Activated CD8-positive, alpha-beta T cell treated with anti-CD3 and anti-CD28 coated beads, Interleukin-2, amount 10 ng/mL, durations not matched to agents 7 days and 5 days (primary cell): ENCODE measurements at regions of chr1 and their contacts with region 1.

Region 1: DNA sequence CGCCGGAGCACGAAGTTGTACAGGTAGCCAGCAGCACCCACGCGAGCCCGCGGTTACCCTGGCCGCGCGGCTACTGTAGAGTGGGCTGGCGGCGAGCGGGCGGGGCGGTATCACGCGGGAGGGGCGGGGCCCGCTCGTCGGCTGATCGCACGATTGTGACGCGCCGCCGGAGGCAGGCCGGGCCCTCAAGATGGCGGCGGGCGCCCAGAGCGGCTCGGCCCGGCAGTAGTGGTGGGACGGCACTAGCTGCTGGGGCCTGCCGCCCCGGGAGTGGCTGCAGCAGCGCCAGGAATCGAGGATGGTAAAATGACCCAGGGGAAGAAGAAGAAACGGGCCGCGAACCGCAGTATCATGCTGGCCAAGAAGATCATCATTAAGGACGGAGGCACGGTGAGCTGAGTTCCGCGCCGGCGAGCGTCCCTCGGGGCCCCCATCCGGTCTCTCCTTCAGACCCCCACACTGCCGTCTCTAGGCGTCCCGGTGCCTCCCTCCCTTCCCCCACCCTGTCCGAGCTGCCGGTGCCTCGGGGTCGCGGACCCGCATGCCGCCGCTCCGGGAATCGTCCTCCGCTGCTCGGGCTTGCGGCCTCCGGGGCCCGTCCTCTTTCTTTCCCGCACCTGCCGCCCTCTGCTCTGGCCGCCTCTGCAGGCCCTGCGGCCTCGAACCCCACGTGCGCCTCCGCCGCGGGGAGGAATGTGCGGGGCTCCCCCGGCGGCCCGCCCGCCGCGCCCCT is 68.3 kb downstream of the SLC35A3 start:
- DNase-seq: peak; percentile 92
- ATAC-seq: peak; percentile 86
- H3K4me3 Mint-ChIP-seq: peak overlapping the region; percentile 97
- H3K27ac Mint-ChIP-seq: peak overlapping the region; percentile 99
- H3K4me1 Mint-ChIP-seq: peaks cover 51% of the 10 kb centered on the region
- H3K27me3 Mint-ChIP-seq: no peaks in the 10 kb centered on the region

Region 2: GRCh38 chr1:99891997-99892396 is 146.1 kb before region 1 on chr1:
- CTCF ChIA-PET with region 1: no interaction called
- POLR2A ChIA-PET with region 1: no interaction called
- DNase-seq: no peak
- ATAC-seq: no peak
- H3K4me3 Mint-ChIP-seq: no peak overlapping the region
- H3K27ac Mint-ChIP-seq: no peak overlapping the region
- H3K4me1 Mint-ChIP-seq: no peaks in the 10 kb centered on the region
- H3K27me3 Mint-ChIP-seq: no peaks in the 10 kb centered on the region

Region 3: DNA sequence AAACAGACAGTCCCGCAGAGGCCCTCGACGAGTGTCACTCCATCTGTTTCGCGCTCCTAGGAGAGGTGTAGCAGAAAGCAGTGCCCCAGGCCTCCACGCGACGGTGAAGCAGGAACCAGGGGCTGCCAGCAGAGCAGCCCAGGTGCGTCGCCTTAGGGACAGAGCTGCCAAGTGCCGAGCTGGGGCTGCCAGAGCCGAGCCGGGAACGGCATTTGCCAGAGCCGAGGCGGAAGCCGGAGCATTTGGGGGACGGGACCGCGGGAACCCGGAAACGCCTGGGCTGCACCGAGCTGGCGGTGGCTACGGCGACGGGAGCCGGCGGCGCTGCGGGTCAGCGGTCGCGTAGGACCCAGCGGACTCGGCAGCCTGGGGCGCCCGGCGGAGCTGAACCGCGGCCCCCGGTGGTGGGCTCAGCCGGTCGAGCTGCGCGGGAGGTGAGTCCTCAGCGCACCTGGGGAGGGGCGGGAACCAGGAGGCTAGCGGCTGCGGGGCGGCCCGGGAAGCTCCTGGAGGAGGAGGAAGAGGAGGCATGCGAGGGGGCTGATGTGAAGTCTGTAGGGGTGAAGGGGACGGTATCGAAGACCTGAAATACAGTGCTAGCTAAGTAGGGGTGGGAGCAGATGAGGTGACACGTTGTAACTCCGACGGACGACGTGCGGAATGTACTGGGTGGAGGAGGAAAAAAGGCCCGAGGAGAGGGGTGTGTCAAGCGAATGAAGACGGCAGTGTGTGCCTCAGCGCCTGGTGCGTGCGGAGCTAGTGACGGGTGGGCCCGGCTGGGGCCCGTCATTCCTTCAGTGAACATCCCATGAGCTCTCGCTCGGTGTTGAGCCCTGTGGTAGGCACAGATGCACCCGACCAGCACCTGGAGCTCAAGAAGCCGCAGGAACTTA is 68.1 kb before region 1 on chr1 and contains the start of gene SLC35A3:
- CTCF ChIA-PET with region 1: interaction called, 4 read pairs
- POLR2A ChIA-PET with region 1: interaction called, 15 read pairs
- DNase-seq: peak; percentile 81
- ATAC-seq: peak; percentile 92
- H3K4me3 Mint-ChIP-seq: peak within 1 kb of the TSS; percentile 97
- H3K27ac Mint-ChIP-seq: peak within 1 kb of the TSS; percentile 97
- H3K4me1 Mint-ChIP-seq: peaks cover 27% of the 10 kb centered on the region
- H3K27me3 Mint-ChIP-seq: no peaks in the 10 kb centered on the region
- total RNA-seq, gene SLC35A3: 18.3 to 18.8 TPM

Region 4: DNA sequence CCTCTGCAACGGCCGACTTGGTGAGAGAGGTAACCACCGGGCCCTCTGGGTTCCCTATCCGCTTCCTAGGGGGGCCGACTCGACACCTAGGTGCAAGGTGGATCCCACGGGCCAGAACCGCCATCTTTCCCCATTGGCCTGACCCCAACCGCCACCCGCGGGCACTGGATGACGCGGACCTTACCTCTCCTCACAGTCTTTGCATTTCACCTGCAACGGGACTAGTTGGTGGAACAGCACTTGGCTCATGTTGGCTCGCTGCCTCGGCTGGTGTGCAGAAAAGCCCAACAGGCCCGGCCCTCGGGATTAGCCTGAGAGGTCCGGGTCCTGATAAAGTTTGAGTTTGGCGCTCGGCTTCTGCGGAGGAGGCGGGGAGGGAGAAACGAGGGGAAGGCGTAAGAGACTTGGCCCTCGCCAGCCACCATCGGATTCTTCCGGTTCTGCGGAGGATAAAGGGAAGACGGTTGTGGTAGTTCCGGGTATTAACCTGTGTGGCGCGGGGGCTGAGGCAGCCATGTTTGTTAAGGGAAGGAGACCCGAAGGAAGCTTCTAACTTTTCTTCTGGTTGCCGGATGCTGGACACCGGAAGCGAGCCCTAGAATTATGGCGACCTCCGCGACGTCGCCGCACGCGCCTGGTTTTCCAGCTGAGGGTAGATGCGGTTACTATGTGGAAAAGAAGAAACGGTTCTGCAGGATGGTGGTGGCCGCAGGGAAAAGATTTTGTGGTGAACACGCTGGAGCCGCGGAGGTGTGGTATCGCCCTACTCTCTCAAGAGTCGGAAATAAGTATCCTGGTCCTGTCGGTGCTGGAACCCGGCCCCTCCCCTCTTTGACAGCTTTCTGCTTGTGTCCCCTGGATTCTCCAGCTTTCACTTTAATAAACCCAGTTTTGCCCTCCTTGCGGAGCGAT is 94.7 kb after region 1 on chr1 and contains the starts of genes SASS6 and TRMT13:
- CTCF ChIA-PET with region 1: interaction called, 4 read pairs
- POLR2A ChIA-PET with region 1: interaction called, 12 read pairs
- DNase-seq: peak; percentile 98
- ATAC-seq: peak; percentile 93
- H3K4me3 Mint-ChIP-seq: peak within 1 kb of the TSS; percentile 99
- H3K27ac Mint-ChIP-seq: peak within 1 kb of the TSS; percentile 97
- H3K4me1 Mint-ChIP-seq: peaks cover 33% of the 10 kb centered on the region
- H3K27me3 Mint-ChIP-seq: no peaks in the 10 kb centered on the region
- total RNA-seq, gene SASS6: 16.4 to 17.7 TPM
- total RNA-seq, gene TRMT13: 17.0 to 17.4 TPM

Region 5: GRCh38 chr1:100279358-100279923 is 241.3 kb after region 1 on chr1:
- CTCF ChIA-PET with region 1: no interaction called
- POLR2A ChIA-PET with region 1: no interaction called
- DNase-seq: no peak
- ATAC-seq: no peak
- H3K4me3 Mint-ChIP-seq: no peak overlapping the region
- H3K27ac Mint-ChIP-seq: no peak overlapping the region
- H3K4me1 Mint-ChIP-seq: peaks cover 8% of the 10 kb centered on the region
- H3K27me3 Mint-ChIP-seq: no peaks in the 10 kb centered on the region